Sciatic nerve (tissue), 2 donors: ENCODE measurements at regions of chr11 and their contacts with region 1.

Region 1: GRCh38 chr11:77127232-77127911 is 674 bp upstream of the MYO7A start:
- DNase-seq: peak; percentile 87
- ATAC-seq: peak; percentile 82

Region 2: DNA sequence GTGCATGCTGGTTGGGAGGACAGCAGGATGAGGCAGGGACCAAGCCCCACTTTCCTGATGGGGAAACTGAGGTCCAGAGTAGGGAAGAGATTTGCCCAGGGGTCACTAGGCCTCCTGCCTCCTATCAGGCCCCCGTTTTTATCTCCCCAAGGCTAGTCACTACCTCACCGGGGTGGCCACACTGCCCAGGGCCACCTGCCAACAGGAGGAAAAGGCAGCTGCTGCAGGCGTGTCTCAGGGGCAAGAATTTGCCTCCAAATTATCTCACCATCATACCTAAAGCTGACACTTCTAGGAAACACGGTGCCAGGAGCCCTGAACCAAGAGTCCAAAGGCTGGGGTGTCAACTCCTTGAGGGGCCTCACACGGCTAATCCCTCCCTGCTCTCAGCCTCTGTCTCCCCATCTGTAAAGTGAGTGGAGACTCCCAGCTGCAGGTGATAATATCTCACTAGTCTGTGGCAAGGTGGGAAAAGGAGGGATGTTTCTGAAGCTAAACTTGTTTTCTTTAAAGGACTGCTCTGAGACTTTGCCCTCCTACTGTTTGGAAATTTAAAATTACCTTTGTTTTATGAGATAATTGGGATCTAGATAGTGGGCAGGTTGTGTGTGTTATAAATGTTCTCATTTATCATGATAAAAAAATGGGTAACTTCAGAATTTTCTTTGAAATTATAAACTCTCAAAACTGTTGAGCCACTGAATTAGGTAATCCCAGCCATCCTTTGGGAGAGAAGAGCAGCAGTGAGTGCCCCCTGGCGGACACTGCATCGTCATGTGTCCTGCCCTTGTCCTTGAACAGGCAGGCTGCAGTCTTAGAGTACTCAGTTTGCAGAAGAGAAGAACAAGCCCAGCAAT is 60.6 kb after region 1 on chr11:
- intact Hi-C with region 1: loop called (anchors 5 kb)
- DNase-seq: peak; percentile 92
- ATAC-seq: peak; percentile 90

Region 3: DNA sequence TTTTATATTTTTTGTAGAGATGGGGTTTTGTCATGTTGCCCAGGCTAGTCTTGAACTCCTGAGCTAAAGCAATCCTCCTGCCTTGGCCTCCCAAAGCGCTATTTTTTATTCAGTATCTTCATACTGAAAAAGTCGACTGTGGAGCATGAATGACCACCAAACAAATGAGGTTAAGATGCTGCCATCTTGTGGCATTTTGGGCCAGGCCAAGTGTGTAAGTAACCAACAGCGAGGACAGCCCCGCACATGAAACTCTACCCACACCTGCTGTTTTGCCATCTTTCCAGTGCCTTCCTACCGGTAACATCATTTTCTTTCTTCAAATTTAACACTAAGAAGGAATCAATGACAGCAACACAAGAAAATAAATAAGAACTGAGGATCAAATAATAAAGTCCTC is 430.2 kb after region 1 on chr11:
- intact Hi-C with region 1: loop called (anchors 10 kb)
- DNase-seq: no peak
- ATAC-seq: no peak